Posterior vena cava (tissue), 2 donors: ENCODE measurements at regions of chr2 and their contacts with region 1.

Region 1: DNA sequence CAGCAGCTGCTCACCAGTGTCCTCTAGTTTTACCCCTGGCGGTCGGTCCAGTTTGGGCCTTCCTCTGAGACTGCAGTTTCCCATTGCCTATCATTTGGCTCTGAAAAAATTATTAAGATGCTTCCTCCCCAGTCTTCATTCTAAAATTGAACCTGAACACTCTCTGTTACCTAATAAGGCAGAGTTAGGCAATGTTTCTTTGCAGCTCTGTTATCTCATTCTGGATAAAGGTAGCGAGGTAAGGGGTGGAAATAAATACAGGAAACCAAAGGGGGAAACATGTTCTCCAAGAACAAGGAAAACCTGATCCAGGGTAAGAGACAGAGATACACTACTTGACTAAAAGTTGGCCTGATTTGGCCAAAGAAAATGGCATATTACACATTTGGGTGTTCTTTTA is 91.0 kb upstream of the FZD5 start:
- DNase-seq: no peak

Region 2: DNA sequence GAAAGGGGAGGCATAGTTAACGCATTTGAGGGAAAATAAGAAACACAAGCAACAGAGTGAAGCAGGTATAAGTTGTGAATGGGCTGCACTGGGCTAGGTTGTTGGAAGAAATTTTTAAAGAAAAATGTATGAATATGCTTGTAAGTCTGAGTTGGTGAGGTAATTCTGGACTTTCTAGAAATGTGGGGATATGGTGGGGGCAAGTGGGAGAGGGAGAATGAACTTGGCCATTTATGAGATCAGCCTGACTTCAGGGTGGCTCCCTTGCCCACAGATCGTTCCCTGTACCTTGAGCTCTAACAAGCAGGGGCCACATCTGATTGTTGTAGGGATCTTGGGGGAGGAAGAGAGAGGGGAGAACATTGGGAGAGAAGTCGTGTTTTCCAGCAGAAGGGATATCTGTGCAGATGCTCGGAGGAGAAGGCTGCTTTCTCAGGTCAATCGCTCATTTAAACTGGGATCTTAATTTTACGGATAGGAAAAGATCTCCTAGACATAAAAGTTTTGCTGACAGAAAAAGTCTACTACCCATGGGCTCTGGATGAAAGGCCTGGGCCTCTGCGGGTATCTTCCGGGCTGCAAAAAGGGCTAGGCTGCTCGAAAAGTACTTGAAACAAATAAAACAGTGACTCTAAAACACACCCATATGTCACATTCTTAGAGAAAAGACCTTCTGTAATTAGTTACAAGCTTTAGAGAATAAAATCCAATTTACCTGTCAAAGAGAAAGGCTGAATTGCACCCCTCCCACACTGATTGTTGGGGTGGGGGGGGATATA is 48.4 kb before region 1 on chr2:
- intact Hi-C with region 1: loop called in 1 of 2 experiments (anchors 1 kb)
- DNase-seq: no peak

Region 3: DNA sequence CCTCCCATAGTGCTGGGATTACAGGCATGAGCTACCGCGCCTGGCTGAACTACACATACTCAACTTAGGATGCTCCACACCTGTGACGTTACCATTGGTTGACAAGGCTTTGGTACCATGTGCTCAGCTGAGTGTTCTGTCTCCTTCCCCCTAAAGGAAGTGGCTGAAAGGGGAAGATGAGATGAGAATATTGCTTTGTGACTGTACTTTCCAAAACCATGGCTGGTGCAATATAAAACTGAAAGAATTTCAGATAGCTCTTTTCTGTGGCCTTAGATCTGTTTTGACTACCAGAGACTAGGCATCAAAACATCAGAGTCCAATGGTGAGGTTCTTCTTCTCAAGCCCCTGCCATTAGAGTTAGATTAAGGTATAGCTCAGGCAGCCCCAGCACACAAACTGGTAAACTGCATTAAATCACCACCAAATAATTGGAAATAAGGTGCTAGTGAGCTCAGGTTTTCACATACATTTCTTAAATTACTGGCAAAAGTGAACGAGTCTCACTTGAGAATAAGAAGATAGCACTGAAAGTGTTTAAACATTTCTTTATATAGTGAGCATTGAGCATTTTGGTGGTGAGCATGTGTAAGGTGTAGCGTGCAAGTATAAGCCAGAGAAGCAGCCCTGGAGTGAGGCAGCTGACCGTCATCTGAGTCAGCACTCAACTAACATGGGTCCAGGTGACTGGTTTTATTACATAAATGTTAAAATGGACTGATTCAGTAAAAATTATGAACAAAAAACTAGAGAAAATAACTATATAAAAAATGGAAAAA is 22.5 kb after region 1 on chr2:
- intact Hi-C with region 1: no loop called
- DNase-seq: no peak